ENCODE measurements at regions of chr16 and their contacts with region 1.

Region 1: GRCh38 chr16:63426275-63426870 is 1390.1 kb upstream of the CDH8 start:
- DNase-seq: no peak
- H3K4me3 ChIP-seq: no peak overlapping the region
- H3K27ac ChIP-seq: no peak overlapping the region
- H3K4me1 ChIP-seq: no peaks in the 10 kb centered on the region
- H3K27me3 ChIP-seq: no peaks in the 10 kb centered on the region
- CTCF ChIP-seq: no peak
- EP300 ChIP-seq: no peak
- POLR2A ChIP-seq: no peak

Region 2: GRCh38 chr16:62370445-62370844 is 1055.9 kb before region 1 on chr16:
- in situ Hi-C with region 1: no loop called
- intact Hi-C with region 1: loop called (anchors 10 kb)
- DNase-seq: no peak
- H3K4me3 ChIP-seq: no peak overlapping the region
- H3K27ac ChIP-seq: no peak overlapping the region
- H3K4me1 ChIP-seq: no peaks in the 10 kb centered on the region
- H3K27me3 ChIP-seq: no peaks in the 10 kb centered on the region
- CTCF ChIP-seq: no peak
- EP300 ChIP-seq: no peak
- POLR2A ChIP-seq: no peak

Region 3: GRCh38 chr16:64416216-64417005 is 990.0 kb after region 1 on chr16:
- in situ Hi-C with region 1: no loop called
- intact Hi-C with region 1: loop called (anchors 5 kb)
- DNase-seq: no peak
- H3K4me3 ChIP-seq: peak overlapping the region in 1 of 4 donors; percentile 20
- H3K27ac ChIP-seq: peak overlapping the region in 3 of 4 donors; percentile 10 to 21 (median 10)
- H3K4me1 ChIP-seq: peaks cover 0 to 27% (median 14%) of the 10 kb centered on the region in 4 donors
- H3K27me3 ChIP-seq: no peaks in the 10 kb centered on the region
- CTCF ChIP-seq: no peak
- EP300 ChIP-seq: no peak
- POLR2A ChIP-seq: no peak

Measured in transverse colon (tissue), 4 donors.